ENCODE measurements at regions of chr19 and their contacts with region 1.

Region 1: DNA sequence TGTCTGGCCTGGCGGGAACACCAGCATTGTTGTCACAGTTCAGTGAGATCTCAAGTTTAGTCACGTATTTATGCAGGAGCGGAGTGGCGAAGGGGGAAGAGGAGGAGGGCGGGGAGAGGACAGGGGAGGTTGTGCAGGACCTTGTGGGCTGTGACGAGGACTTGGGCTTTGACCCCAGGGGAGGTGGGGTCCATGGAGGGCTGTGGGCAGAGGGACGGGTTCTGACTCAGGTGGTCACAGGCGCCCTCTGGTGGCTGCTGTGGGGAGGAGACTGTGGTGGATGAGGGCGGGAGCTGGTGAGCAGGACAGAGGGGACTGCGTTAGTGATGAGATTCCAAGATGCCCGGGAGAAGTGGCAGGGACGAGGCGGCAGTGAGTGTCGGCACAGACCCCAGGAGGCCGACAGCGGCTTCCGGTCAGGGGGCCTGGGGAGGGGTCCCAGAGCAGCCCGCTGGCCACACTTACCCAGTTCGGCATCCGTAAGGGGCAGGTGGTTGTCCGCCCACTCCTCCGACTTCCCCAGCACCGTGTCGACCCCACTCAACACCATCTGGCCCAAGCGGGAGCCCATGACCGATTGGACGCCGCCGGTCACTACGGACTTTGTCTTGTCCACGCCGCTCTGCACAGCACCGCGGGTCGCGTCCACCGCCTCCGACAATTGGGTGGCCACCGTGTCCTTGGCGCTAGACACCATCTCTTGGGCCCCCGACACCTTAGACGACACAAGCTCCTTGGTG is 15.7 kb downstream of the PLIN3 start:
- DNase-seq: peak; percentile 92
- ATAC-seq: peak; percentile 99
- H3K4me3 Mint-ChIP-seq: no peak overlapping the region
- H3K27ac Mint-ChIP-seq: 0 out of 2 replicates have a peak overlapping the region, but pooled peaks have one; percentile 49
- H3K4me1 Mint-ChIP-seq: no peaks in the 10 kb centered on the region
- H3K27me3 Mint-ChIP-seq: no peaks in the 10 kb centered on the region
- CTCF ChIP-seq: peak; percentile 92

Region 2: GRCh38 chr19:4803736-4804695 is 47.7 kb before region 1 on chr19:
- CTCF ChIA-PET with region 1: interaction called, 161 read pairs
- POLR2A ChIA-PET with region 1: interaction called, 6 read pairs
- DNase-seq: peak; percentile 93
- ATAC-seq: peak; percentile 98
- H3K4me3 Mint-ChIP-seq: no peak overlapping the region
- H3K27ac Mint-ChIP-seq: no peak overlapping the region
- H3K4me1 Mint-ChIP-seq: no peaks in the 10 kb centered on the region
- H3K27me3 Mint-ChIP-seq: no peaks in the 10 kb centered on the region
- CTCF ChIP-seq: peak; percentile 90

Region 3: GRCh38 chr19:4823577-4823976 is 28.1 kb before region 1 on chr19:
- CTCF ChIA-PET with region 1: interaction called, 23 read pairs
- POLR2A ChIA-PET with region 1: no interaction called
- DNase-seq: no peak
- ATAC-seq: no peak
- H3K4me3 Mint-ChIP-seq: no peak overlapping the region
- H3K27ac Mint-ChIP-seq: no peak overlapping the region
- H3K4me1 Mint-ChIP-seq: no peaks in the 10 kb centered on the region
- H3K27me3 Mint-ChIP-seq: peaks cover under 1% of the 10 kb centered on the region; the same call in 1 of the 2 replicates
- CTCF ChIP-seq: no peak

Region 4: GRCh38 chr19:4841366-4841704 is 10.4 kb before region 1 on chr19:
- CTCF ChIA-PET with region 1: interaction called, 12 read pairs
- POLR2A ChIA-PET with region 1: no interaction called
- DNase-seq: no peak
- ATAC-seq: no peak
- H3K4me3 Mint-ChIP-seq: no peak overlapping the region
- H3K27ac Mint-ChIP-seq: no peak overlapping the region
- H3K4me1 Mint-ChIP-seq: no peaks in the 10 kb centered on the region
- H3K27me3 Mint-ChIP-seq: no peaks in the 10 kb centered on the region
- CTCF ChIP-seq: no peak

Region 5: DNA sequence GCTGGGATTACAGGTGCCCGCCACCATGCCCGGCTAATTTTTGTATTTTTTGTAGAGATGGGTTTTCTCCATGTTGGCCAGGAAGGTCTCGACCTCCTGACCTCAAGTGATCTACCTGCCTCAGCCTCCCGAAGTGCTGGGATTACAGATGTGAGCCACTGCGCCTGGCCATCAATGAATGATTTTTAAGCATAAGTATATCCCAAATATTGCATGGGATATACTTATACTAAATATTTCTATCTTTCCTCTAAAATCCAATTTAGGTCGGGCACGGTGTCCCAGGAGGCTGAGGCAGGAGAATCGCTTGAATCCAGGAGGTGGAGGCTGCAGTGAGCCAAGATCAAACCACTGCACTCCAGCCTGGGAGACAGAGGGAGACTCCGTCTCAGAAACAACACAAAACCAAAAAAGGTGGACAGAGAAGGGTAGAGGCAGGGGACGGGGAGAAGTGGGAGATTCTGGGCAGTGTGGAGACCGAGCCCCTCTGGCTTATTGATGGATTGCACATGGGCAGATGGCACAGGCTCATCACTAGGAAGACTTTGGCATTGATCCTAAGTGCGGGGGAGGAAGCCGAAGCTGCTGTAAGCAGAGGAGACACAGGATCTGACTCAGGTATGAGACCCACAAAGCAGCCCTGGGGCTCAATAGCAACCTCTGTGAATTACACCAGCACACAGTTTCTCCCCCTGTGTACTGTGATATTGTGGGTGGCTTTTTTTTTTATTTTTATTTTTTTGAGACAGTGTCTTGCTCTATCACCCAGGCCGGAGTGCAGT is 37.5 kb after region 1 on chr19:
- CTCF ChIA-PET with region 1: interaction called, 10 read pairs
- POLR2A ChIA-PET with region 1: interaction called, 5 read pairs
- DNase-seq: no peak
- ATAC-seq: no peak
- H3K4me3 Mint-ChIP-seq: no peak overlapping the region
- H3K27ac Mint-ChIP-seq: no peak overlapping the region
- H3K4me1 Mint-ChIP-seq: no peaks in the 10 kb centered on the region
- H3K27me3 Mint-ChIP-seq: peaks cover 50% of the 10 kb centered on the region
- CTCF ChIP-seq: no peak